Activated T-helper 2 cell treated with anti-CD3 and anti-CD28 coated beads, Interferon-gamma antibody, Interleukin-2, Interleukin-4, amounts not matched to agents 10 μg/mL and 5 μg/mL and 100 μg/mL, durations not matched to agents 14 hours and 24 hours and 36 hours (primary cell): ENCODE measurements at regions of chr2 and their contacts with region 1.

Region 1: DNA sequence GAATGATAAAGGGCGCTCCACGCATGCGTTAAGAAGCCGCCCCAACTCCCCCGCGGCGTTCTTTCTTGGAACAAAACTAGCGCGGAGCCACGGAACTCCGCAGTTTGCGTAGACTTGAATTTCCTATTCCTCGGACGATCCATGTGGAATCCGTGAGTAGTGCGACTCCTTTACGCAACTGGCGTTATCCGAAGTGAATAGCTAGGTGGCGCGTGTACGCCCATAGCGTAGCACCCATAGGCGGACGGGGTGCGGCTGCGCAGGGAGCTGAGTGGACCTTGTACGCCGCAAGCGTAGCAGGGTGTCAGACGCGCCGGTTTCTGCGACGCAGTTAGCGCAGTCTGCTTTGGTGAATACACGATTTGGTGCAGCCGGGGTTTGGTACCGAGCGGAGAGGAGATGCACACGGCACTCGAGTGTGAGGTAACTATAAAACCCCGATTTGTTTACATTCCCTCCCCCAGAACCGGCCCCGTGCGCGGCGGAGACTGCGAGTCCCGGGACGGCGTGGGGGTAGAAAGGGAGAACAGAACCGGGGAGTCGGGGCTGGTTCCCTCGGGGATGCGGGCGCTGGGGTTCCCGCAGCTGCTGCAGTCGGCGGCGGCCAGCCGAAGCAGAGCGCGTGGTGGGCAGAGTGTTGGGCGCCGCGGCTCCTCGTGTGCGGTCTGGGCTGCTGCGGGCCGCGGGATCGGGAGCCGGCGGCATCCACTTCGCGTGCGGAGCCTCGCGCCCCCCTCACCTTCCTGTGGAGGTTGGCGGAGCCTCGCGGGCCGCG is at the start of gene SLC39A10:
- DNase-seq: peak; percentile 97
- H3K4me3 Mint-ChIP-seq: peak within 1 kb of the TSS; percentile 94
- H3K27ac Mint-ChIP-seq: peak within 1 kb of the TSS; percentile 100
- H3K4me1 Mint-ChIP-seq: peaks cover 25% of the 10 kb centered on the region
- H3K27me3 Mint-ChIP-seq: no peaks in the 10 kb centered on the region
- total RNA-seq, gene SLC39A10: 27.2 and 27.6 TPM in 2 replicates

Region 2: DNA sequence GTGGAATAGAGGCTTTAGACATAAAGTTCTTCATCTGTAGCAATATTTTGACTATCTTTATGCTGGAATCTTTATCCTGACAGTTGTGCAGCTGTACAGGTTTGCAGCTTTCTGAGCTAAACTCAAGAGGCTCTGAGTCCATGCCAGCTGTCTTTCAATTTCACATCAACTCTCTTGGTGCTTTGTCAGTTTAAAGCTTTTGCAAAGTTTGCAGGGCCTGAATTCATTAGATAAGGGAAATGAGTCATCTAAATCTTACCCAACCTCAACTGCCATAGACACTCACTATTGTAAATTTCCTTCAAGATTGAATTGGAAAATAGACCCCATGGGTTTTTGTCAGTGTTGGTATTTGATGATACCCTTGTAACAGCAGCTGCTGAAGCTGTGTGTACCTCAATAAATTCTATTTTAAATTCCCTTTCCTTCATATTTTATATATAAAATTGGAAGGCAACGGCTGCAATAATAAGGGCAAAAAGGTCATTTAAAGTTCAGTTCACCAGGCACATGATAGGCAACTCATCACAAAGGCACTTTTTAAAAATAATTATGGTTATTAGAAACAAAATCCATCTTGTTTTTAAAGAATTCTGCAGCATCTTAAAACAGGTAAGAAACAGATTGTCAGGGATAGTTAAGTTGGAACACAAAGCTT is 169.9 kb before region 1 on chr2:
- intact Hi-C with region 1: loop called (anchors 1 kb)
- DNase-seq: peak; percentile 28
- H3K4me3 Mint-ChIP-seq: no peak overlapping the region
- H3K27ac Mint-ChIP-seq: peak overlapping the region; percentile 45
- H3K4me1 Mint-ChIP-seq: peaks cover 44% of the 10 kb centered on the region
- H3K27me3 Mint-ChIP-seq: no peaks in the 10 kb centered on the region

Region 3: DNA sequence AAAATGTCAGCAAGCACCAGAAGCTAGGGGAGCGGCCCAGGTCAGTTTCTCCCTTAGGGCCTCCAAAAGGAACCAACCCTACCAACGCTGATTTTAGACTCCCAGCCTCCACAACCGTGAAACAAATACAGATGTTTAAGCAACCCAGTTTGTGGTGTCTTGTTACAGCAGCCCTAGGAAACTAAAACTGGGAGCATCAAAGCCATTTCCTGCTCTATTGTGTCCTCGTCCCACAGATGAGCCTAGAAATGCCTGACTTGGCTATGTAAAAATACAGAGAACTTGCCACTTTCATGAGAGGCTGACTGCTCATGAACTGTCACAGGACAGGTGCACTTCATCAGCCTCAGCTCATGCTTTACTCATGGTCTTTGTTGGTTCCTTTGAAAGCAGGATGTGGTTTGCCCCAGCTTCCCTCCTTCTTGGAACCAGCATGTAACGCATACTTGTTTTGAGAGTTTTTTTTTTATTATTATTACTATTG is 97.6 kb before region 1 on chr2:
- intact Hi-C with region 1: loop called (anchors 1 kb)
- DNase-seq: peak; percentile 82
- H3K4me3 Mint-ChIP-seq: peak overlapping the region; percentile 56
- H3K27ac Mint-ChIP-seq: peak overlapping the region; percentile 90
- H3K4me1 Mint-ChIP-seq: peaks cover 57% of the 10 kb centered on the region
- H3K27me3 Mint-ChIP-seq: no peaks in the 10 kb centered on the region

Region 4: GRCh38 chr2:195601361-195601760 is 55.7 kb before region 1 on chr2:
- intact Hi-C with region 1: no loop called
- DNase-seq: no peak
- H3K4me3 Mint-ChIP-seq: no peak overlapping the region
- H3K27ac Mint-ChIP-seq: no peak overlapping the region
- H3K4me1 Mint-ChIP-seq: peaks cover 14% of the 10 kb centered on the region
- H3K27me3 Mint-ChIP-seq: no peaks in the 10 kb centered on the region

Region 5: DNA sequence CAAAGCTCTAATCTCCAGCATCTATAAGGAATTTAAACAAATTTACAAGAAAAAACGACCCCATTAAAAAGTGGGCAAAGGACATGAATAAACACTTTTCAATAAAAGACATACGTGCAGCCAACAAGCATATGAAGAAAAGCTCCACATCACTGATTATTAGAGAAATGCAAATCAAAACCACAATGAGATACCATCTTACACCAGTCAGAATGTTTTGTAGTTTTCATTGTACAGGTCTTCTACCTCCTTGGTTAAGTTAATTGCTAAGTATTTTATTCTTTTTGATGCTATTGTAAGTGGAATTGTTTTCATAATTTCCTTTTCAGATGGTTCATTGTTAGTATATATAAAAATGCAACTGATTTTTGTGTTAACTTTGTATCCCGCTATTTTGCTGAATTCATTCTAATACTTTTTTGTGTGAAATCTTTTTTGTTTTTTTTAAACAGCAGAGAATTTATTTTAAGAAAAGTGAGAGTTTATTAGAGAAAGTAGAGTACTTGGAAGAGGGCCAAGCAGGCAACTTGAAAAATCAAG is 40.7 kb after region 1 on chr2:
- intact Hi-C with region 1: no loop called
- DNase-seq: no peak
- H3K4me3 Mint-ChIP-seq: no peak overlapping the region
- H3K27ac Mint-ChIP-seq: no peak overlapping the region
- H3K4me1 Mint-ChIP-seq: peaks cover 12% of the 10 kb centered on the region
- H3K27me3 Mint-ChIP-seq: no peaks in the 10 kb centered on the region

Region 6: GRCh38 chr2:196068271-196069209 is 411.5 kb after region 1 on chr2 and contains the start of gene DNAH7:
- intact Hi-C with region 1: loop called (anchors 2 kb)
- DNase-seq: peak; percentile 89
- H3K4me3 Mint-ChIP-seq: peak within 1 kb of the TSS; percentile 85
- H3K27ac Mint-ChIP-seq: peak within 1 kb of the TSS; percentile 69
- H3K4me1 Mint-ChIP-seq: peaks cover 3% of the 10 kb centered on the region
- H3K27me3 Mint-ChIP-seq: peaks cover 15% of the 10 kb centered on the region
- total RNA-seq, gene DNAH7: not detected in 2 replicates